Gastrocnemius medialis (tissue), 4 donors: ENCODE measurements at regions of chr4 and their contacts with region 1.

Region 1: GRCh38 chr4:56655209-56655626 is 25.9 kb downstream of the HOPX start:
- DNase-seq: peak; percentile 40 to 63
- ATAC-seq: peak; percentile 68 to 78
- H3K4me3 ChIP-seq: peak overlapping the region; percentile 64 to 70 (median 70)
- H3K27ac ChIP-seq: peak overlapping the region; percentile 78 to 89 (median 88)
- H3K4me1 ChIP-seq: peaks cover 45 to 52% of the 10 kb centered on the region in 2 donors
- H3K27me3 ChIP-seq: no peaks in the 10 kb centered on the region
- CTCF ChIP-seq: peak in 1 of 5 experiments; percentile 6
- POLR2A ChIP-seq: peak; percentile 55 to 58

Region 2: DNA sequence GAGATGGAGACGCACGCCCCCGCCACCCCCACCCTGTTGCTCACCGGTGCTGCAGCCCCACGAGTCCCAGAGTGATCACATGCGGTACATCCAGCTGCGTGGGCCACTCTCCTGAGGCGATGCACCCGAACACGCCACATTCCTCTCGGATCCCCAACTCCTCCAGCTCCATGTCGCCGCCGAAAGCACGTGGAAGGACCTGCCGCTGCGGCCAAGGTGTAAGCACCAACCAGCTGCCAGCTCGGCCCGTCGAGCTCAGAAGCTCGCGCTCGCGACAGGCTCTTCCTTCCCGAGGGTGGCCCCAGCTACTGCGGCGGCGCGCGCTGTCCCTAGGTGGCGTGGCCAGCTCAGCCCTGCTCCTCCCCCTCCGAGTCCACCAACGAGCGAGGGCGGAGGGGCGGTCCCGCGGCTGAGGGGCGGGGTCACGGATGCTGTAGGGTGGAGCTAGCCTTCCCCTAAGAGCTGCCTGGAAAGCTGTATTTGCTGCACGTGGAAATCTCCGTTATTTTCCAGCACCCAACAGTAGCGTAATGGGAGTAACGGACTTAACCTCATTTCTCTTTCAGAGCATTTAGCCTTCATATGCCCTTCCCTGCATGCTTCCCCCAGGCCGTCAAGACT is 219.8 kb before region 1 on chr4 and contains the start of gene PPAT:
- in situ Hi-C with region 1: no loop called
- intact Hi-C with region 1: loop called (anchors 5 kb)
- DNase-seq: peak; percentile 96
- ATAC-seq: peak; percentile 87 to 90
- H3K4me3 ChIP-seq: peak within 1 kb of the TSS; percentile 72 to 91 (median 87)
- H3K27ac ChIP-seq: peak within 1 kb of the TSS; percentile 91 to 99 (median 98)
- H3K4me1 ChIP-seq: peaks cover 16 to 18% of the 10 kb centered on the region in 2 donors
- H3K27me3 ChIP-seq: no peaks in the 10 kb centered on the region
- CTCF ChIP-seq: peak in 3 of 5 experiments; percentile 20 to 52 (median 40)
- POLR2A ChIP-seq: peak; percentile 64 to 67
- total RNA-seq, gene PPAT: 2.6 to 5.4 (median 3.9) TPM

Region 3: DNA sequence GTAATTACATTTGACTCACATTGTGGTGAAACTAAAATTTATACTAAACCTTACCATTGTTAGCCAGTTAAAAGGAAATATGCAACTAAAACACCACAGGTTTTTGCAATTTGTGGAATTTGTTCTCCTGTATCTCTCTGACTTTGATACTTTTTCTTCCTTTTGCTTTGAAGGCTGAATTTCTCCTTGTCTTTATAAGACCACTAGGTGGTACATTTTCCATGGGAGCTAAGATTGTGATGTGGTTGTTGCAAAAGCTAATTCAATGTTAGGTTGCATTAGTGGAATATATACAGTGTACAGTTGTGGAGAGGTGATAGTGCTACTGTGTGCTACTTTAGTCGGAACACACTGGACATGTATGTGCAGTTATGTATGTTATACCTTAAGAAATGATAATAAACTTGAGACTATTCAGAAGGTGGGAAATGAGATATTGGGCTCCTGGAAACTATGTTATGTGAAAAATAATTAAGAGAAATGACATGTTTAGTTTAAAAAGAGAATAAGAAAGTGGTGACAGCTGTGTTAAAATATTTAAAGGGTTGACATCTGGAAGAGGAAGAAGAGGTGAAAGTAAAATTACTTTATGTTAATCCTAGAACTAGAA is 79.3 kb before region 1 on chr4:
- in situ Hi-C with region 1: no loop called
- intact Hi-C with region 1: loop called (anchors 1 kb)
- DNase-seq: no peak
- ATAC-seq: no peak
- H3K4me3 ChIP-seq: no peak overlapping the region
- H3K27ac ChIP-seq: no peak overlapping the region
- H3K4me1 ChIP-seq: no peaks in the 10 kb centered on the region
- H3K27me3 ChIP-seq: no peaks in the 10 kb centered on the region
- CTCF ChIP-seq: peak in 3 of 5 experiments; percentile 15 to 49 (median 44)
- POLR2A ChIP-seq: no peak

Region 4: DNA sequence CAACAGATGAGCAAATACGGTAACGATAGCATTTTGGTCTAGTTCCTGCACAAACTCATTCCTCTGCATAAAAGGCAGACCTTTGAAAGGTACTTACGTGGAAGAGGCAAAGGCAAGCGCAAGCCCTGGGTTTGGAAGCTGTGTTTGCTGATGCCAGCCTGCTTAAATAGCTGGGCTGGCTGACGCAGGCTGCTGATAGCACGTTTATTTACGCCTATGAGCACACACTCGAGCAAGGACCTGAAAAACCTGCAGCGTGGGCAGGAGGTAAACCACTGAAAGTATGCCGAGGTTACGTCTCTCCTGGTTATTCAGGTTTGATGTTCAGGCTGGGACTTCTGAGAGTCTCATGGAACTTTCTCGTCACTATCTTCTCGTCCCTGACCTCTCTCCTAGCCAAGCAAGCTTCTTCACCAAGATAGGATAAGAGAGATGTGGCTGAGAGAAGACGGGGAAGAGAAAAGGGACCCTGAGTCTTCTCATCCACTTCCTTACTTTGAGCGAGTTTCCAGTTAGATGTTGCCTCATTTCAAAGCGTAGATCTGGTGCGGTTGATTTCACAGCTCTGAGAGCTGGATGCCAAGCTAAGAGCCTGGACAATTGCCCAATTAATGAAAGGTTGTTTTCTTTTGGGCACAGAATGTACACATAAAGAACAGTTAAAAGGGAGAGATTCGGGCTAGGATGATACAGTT is 26.1 kb after region 1 on chr4 and contains the start of gene HOPX:
- in situ Hi-C with region 1: no loop called
- intact Hi-C with region 1: no loop called
- DNase-seq: no peak
- ATAC-seq: no peak
- H3K4me3 ChIP-seq: peak within 1 kb of the TSS in 1 of 4 donors; percentile 16
- H3K27ac ChIP-seq: no peak within 1 kb of the TSS
- H3K4me1 ChIP-seq: peaks cover 7 to 8% of the 10 kb centered on the region in 2 donors
- H3K27me3 ChIP-seq: peaks cover 0 to 37% (median 10%) of the 10 kb centered on the region in 3 donors
- CTCF ChIP-seq: no peak
- POLR2A ChIP-seq: no peak
- total RNA-seq, gene HOPX: 5.3 to 6.6 (median 5.7) TPM

Region 5: GRCh38 chr4:56742080-56742871 is 87.1 kb after region 1 on chr4:
- in situ Hi-C with region 1: no loop called
- intact Hi-C with region 1: no loop called
- DNase-seq: no peak
- ATAC-seq: no peak
- H3K4me3 ChIP-seq: no peak overlapping the region
- H3K27ac ChIP-seq: no peak overlapping the region
- H3K4me1 ChIP-seq: no peaks in the 10 kb centered on the region
- H3K27me3 ChIP-seq: no peaks in the 10 kb centered on the region
- CTCF ChIP-seq: no peak
- POLR2A ChIP-seq: no peak

Region 6: GRCh38 chr4:56843421-56843899 is 188.2 kb after region 1 on chr4:
- in situ Hi-C with region 1: no loop called
- intact Hi-C with region 1: loop called (anchors 5 kb)
- DNase-seq: no peak
- ATAC-seq: no peak
- H3K4me3 ChIP-seq: no peak overlapping the region
- H3K27ac ChIP-seq: no peak overlapping the region
- H3K4me1 ChIP-seq: no peaks in the 10 kb centered on the region
- H3K27me3 ChIP-seq: no peaks in the 10 kb centered on the region
- CTCF ChIP-seq: no peak
- POLR2A ChIP-seq: no peak

Region 7: DNA sequence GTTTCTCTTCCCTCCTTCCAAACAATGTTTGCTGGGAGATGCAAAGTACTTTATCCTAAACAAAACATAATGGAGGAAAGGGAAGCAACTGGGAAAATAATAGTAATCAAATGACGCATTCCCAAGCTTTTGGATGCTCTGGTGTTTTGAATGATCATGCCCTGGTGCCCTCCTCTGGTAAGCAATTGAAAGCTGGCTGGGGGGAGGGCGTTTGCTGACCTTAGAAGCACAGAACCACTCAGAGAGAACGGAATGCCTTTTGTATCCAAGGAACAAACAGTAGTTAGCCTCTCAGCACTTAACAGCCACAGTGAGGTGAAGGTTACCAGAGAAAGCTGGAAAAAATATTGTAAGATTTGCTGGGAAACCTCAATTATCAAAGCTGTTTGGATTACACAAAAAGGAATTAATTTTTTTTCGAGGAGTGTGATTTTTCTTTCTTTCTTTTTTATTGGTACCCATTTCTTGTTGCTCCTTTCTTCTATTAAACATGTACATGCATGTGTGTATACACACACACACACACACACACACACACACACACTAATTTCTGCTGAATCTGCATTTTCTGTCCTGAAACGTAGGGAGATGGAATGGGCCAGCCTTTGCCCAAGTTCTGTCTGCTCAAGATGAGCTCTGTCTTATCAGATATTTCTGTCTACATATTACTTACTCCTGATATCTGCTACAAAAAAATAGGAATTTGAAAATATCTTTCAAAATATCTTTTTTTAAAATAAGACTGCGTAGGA is 610.8 kb after region 1 on chr4:
- in situ Hi-C with region 1: no loop called
- intact Hi-C with region 1: no loop called
- DNase-seq: no peak
- ATAC-seq: no peak
- H3K4me3 ChIP-seq: no peak overlapping the region
- H3K27ac ChIP-seq: no peak overlapping the region
- H3K4me1 ChIP-seq: peaks cover 0 to 5% of the 10 kb centered on the region in 2 donors
- H3K27me3 ChIP-seq: no peaks in the 10 kb centered on the region
- CTCF ChIP-seq: no peak
- POLR2A ChIP-seq: no peak